H1 (cell line): ENCODE measurements at regions of chr14 and their contacts with region 1.

Region 1: GRCh38 chr14:29671034-29671433 is 256.6 kb downstream of the PRKD1 start:
- DNase-seq: no peak
- H3K4me3 ChIP-seq: no peak overlapping the region
- H3K27ac ChIP-seq: no peak overlapping the region
- H3K4me1 ChIP-seq: no peaks in the 10 kb centered on the region; a peak in 1 of 7 replicates
- H3K27me3 ChIP-seq: no peaks in the 10 kb centered on the region
- CTCF ChIP-seq: no peak
- EP300 ChIP-seq: no peak
- POLR2A ChIP-seq: no peak
- RAD21 ChIP-seq: no peak

Region 2: GRCh38 chr14:29681316-29681715 is 10.3 kb after region 1 on chr14:
- CTCF ChIA-PET with region 1: interaction called, 10 read pairs
- POLR2A ChIA-PET with region 1: interaction called, 3 read pairs
- DNase-seq: no peak
- H3K4me3 ChIP-seq: no peak overlapping the region
- H3K27ac ChIP-seq: no peak overlapping the region
- H3K4me1 ChIP-seq: no peaks in the 10 kb centered on the region
- H3K27me3 ChIP-seq: no peaks in the 10 kb centered on the region
- CTCF ChIP-seq: no peak
- EP300 ChIP-seq: no peak
- POLR2A ChIP-seq: no peak
- RAD21 ChIP-seq: no peak

Region 3: DNA sequence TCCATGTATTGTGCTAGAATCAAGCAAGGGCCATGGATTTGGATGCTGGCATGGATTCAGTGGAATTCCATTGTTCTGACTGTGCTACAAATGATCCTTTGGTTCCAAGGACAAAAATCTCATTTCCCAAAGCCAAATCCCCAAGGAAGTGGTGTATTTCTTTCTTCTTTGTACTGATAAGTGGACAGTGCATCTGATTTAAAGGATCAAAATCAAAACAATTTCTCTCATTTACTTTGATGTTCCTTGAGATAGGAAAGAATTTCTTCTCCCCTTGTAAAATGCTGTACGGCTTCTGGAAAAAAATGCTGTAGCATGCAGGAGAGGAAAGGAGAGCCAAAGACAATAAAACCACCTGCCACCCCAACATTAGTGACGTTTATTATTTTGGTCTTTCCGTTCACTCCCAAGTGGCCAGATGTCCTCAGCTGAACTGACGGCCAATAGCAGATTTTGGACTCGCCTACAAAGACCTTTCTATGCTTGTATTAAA is 70.9 kb after region 1 on chr14:
- CTCF ChIA-PET with region 1: no interaction called
- POLR2A ChIA-PET with region 1: no interaction called
- DNase-seq: no peak
- H3K4me3 ChIP-seq: no peak overlapping the region
- H3K27ac ChIP-seq: no peak overlapping the region
- H3K4me1 ChIP-seq: peaks cover 0 to 8% (median under 1%) of the 10 kb centered on the region in 4 experiments; a peak in 1 of 7 replicates
- H3K27me3 ChIP-seq: no peaks in the 10 kb centered on the region
- CTCF ChIP-seq: no peak
- EP300 ChIP-seq: no peak
- POLR2A ChIP-seq: no peak
- RAD21 ChIP-seq: no peak

Region 4: GRCh38 chr14:30462358-30462757 is 791.3 kb after region 1 on chr14:
- CTCF ChIA-PET with region 1: no interaction called
- POLR2A ChIA-PET with region 1: interaction called, 10 read pairs
- DNase-seq: no peak
- H3K4me3 ChIP-seq: no peak overlapping the region
- H3K27ac ChIP-seq: no peak overlapping the region
- H3K4me1 ChIP-seq: 0 out of 7 replicates have a peak, but pooled peaks cover 0 to 2% (median 0%) of the 10 kb centered on the region in 4 experiments
- H3K27me3 ChIP-seq: no peaks in the 10 kb centered on the region
- CTCF ChIP-seq: no peak
- EP300 ChIP-seq: no peak
- POLR2A ChIP-seq: no peak
- RAD21 ChIP-seq: no peak